ENCODE measurements at regions of chr2 and their contacts with region 1.

Region 1: GRCh38 chr2:107361751-107362381 is 464.8 kb upstream of the RGPD4 start:
- DNase-seq: no peak
- H3K4me3 Mint-ChIP-seq: no peak overlapping the region
- H3K27ac Mint-ChIP-seq: no peak overlapping the region
- H3K4me1 Mint-ChIP-seq: no peaks in the 10 kb centered on the region
- H3K27me3 Mint-ChIP-seq: no peaks in the 10 kb centered on the region

Region 2: GRCh38 chr2:108220942-108221541 is 859.2 kb after region 1 on chr2:
- intact Hi-C with region 1: loop called (anchors 5 kb)
- DNase-seq: no peak
- H3K4me3 Mint-ChIP-seq: no peak overlapping the region
- H3K27ac Mint-ChIP-seq: no peak overlapping the region
- H3K4me1 Mint-ChIP-seq: no peaks in the 10 kb centered on the region
- H3K27me3 Mint-ChIP-seq: no peaks in the 10 kb centered on the region